ENCODE measurements at regions of chr4 and their contacts with region 1.

Region 1: DNA sequence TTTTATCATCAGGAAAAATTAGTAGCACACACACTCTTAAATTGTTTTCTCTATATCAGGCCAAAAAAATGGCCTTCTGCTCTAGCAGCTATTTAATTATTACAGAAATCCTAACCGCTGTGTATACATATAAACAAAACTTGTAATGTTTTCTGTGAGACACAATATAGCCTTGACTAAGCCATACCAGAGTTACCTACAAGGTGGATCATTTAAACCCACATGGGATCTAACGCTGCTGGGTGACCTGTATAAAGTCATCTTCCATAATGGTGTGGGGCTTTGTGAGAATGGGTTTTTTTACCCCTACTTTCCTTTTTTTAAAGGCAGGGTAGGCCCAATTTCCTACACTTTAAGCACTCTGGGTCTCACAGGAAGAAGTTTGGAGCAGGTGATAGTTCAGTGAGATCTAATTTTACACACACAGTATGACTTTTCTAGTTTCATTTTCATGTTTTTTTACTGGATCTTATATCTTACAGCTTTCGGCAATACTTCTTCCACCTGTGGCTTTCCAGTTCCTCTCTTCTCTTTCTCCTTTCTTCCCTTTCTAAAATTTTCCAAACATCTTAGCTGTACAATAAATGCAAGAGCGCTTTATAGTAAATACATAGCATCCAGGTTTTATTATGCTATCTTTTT is 66.9 kb upstream of the MMAA start:
- DNase-seq: no peak
- CTCF ChIP-seq: no peak

Region 2: DNA sequence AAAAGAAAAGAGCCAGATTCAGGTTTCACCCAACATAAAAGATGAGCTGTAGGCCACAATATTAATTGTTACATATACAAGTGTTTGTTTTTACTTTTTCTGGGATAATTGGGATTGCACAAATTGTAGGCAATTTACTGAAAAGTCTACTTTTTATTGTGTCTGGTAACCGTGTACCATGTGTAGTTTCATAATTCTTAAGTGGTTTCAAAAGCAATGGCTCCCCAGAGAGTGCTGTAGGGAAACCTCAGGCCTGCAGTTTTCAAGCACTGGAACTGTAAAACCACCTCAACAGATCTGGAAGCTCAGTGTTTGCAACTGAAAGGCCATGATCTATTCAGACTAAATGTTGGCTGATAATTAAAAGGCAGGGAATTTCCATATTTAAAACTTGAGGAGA is 13.0 kb after region 1 on chr4:
- CTCF ChIA-PET with region 1: interaction called, 14 read pairs
- POLR2A ChIA-PET with region 1: no interaction called
- DNase-seq: no peak
- CTCF ChIP-seq: no peak

Region 3: GRCh38 chr4:145625677-145626622 is 73.6 kb after region 1 on chr4:
- CTCF ChIA-PET with region 1: no interaction called
- POLR2A ChIA-PET with region 1: no interaction called
- DNase-seq: no peak
- CTCF ChIP-seq: no peak